Left ventricle myocardium inferior (tissue), 1 donor: ENCODE measurements at regions of chr7 and their contacts with region 1.

Region 1: GRCh38 chr7:10939911-10940703 is 33.6 kb upstream of the PHF14 start:
- DNase-seq: peak; percentile 89
- H3K4me3 ChIP-seq: peak overlapping the region; percentile 84
- H3K27ac ChIP-seq: peak overlapping the region; percentile 96
- H3K4me1 ChIP-seq: peaks cover 64% of the 10 kb centered on the region
- H3K27me3 ChIP-seq: no peaks in the 10 kb centered on the region
- CTCF ChIP-seq: no peak

Region 2: GRCh38 chr7:10981317-10981716 is 41.2 kb after region 1 on chr7:
- intact Hi-C with region 1: no loop called
- DNase-seq: no peak
- H3K4me3 ChIP-seq: no peak overlapping the region
- H3K27ac ChIP-seq: no peak overlapping the region
- H3K4me1 ChIP-seq: no peaks in the 10 kb centered on the region
- H3K27me3 ChIP-seq: no peaks in the 10 kb centered on the region
- CTCF ChIP-seq: no peak

Region 3: GRCh38 chr7:11343818-11344413 is 403.8 kb after region 1 on chr7:
- intact Hi-C with region 1: loop called (anchors 10 kb)
- DNase-seq: no peak
- H3K4me3 ChIP-seq: no peak overlapping the region
- H3K27ac ChIP-seq: no peak overlapping the region
- H3K4me1 ChIP-seq: peaks cover 6% of the 10 kb centered on the region
- H3K27me3 ChIP-seq: peaks cover 5% of the 10 kb centered on the region
- CTCF ChIP-seq: peak; percentile 84